Caco-2 (cell line): ENCODE measurements at regions of chr20 and their contacts with region 1.

Region 1: DNA sequence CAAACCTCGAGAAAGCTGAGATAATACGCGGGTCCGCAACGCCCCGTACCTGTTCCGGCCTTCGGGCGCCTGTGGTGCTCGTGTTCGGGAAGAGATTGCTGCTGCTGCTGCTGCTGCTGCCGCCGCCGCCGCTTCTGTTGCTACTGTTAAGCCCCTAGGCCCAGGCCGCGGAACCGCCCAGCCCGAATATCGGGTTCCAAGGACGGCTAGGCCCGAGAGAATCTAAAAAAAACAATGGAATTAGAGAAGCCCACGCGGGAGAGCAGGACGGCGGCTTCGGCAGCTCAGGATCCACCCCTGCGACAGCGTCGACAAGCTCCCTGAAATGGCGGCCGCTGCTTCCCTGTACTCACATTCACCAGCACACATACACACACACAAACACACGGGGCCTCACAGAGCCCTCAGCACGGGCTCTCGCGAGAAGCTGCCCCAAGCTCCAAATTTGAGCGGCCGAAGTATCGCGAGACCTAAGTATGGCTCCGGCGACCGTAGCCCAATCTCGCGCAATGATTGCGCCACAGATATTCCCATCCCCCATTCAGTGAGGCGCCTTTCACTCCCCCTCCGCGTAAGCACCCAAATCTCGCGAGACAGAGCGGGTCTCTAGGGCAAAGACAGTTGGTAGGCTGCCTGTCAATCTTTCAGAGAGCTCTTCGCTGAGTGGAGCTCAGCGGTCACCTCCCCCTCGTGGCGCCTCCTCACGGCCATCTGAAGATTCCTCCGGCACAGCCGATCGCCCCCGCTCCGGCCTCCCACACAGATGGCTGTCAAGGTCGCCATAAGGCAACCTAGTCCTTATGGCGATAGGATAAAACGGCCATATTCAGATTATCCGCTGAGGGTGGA is at the start of gene RBM39:
- DNase-seq: peak; percentile 100
- H3K4me3 ChIP-seq: peak within 1 kb of the TSS; percentile 77
- H3K4me3 Mint-ChIP-seq: peak within 1 kb of the TSS; percentile 80
- H3K27ac Mint-ChIP-seq: peak within 1 kb of the TSS; percentile 96
- H3K4me1 ChIP-seq: peaks cover 31% of the 10 kb centered on the region
- H3K4me1 Mint-ChIP-seq: peaks cover 34% of the 10 kb centered on the region
- H3K27me3 ChIP-seq: no peaks in the 10 kb centered on the region
- H3K27me3 Mint-ChIP-seq: no peaks in the 10 kb centered on the region
- CTCF ChIP-seq: peak; percentile 52 to 65
- total RNA-seq, gene RBM39: 750 and 777 TPM in 2 replicates

Region 2: GRCh38 chr20:35517125-35517524 is 225.0 kb before region 1 on chr20:
- CTCF ChIA-PET with region 1: no interaction called
- POLR2A ChIA-PET with region 1: no interaction called
- intact Hi-C with region 1: no loop called
- DNase-seq: no peak
- H3K4me3 ChIP-seq: no peak overlapping the region
- H3K4me3 Mint-ChIP-seq: no peak overlapping the region
- H3K27ac Mint-ChIP-seq: no peak overlapping the region
- H3K4me1 ChIP-seq: no peaks in the 10 kb centered on the region
- H3K4me1 Mint-ChIP-seq: no peaks in the 10 kb centered on the region
- H3K27me3 ChIP-seq: no peaks in the 10 kb centered on the region
- H3K27me3 Mint-ChIP-seq: no peaks in the 10 kb centered on the region
- CTCF ChIP-seq: no peak

Region 3: GRCh38 chr20:35629427-35630145 is 112.5 kb before region 1 on chr20:
- CTCF ChIA-PET with region 1: no interaction called
- POLR2A ChIA-PET with region 1: interaction called, 16 read pairs
- intact Hi-C with region 1: no loop called
- DNase-seq: no peak
- H3K4me3 ChIP-seq: no peak overlapping the region
- H3K4me3 Mint-ChIP-seq: no peak overlapping the region
- H3K27ac Mint-ChIP-seq: no peak overlapping the region
- H3K4me1 ChIP-seq: no peaks in the 10 kb centered on the region
- H3K4me1 Mint-ChIP-seq: peaks cover 6% of the 10 kb centered on the region
- H3K27me3 ChIP-seq: no peaks in the 10 kb centered on the region
- H3K27me3 Mint-ChIP-seq: no peaks in the 10 kb centered on the region
- CTCF ChIP-seq: no peak

Region 4: DNA sequence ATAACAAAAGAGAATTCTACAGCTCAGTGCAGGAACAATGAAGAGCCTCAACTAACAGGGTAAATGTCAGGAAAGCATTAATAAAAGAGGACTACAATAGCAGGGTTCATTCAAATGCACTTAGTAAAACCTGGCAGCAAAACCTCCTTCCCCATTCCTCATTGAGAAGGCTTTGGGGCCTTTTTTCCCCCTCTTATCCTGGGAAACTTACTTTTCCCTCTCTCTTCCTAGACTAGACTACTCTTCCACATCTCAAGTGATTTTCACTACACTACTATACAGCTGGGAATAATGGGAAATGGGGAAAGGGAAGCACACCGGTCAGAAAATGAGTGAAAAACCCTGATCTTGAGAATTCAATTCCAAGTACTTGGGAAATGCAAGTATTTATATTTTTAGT is 32.9 kb before region 1 on chr20:
- CTCF ChIA-PET with region 1: no interaction called
- POLR2A ChIA-PET with region 1: interaction called, 13 read pairs
- intact Hi-C with region 1: no loop called
- DNase-seq: no peak
- H3K4me3 ChIP-seq: no peak overlapping the region
- H3K4me3 Mint-ChIP-seq: no peak overlapping the region
- H3K27ac Mint-ChIP-seq: peak overlapping the region; percentile 4
- H3K4me1 ChIP-seq: no peaks in the 10 kb centered on the region
- H3K4me1 Mint-ChIP-seq: peaks cover 10% of the 10 kb centered on the region
- H3K27me3 ChIP-seq: no peaks in the 10 kb centered on the region
- H3K27me3 Mint-ChIP-seq: no peaks in the 10 kb centered on the region
- CTCF ChIP-seq: no peak

Region 5: DNA sequence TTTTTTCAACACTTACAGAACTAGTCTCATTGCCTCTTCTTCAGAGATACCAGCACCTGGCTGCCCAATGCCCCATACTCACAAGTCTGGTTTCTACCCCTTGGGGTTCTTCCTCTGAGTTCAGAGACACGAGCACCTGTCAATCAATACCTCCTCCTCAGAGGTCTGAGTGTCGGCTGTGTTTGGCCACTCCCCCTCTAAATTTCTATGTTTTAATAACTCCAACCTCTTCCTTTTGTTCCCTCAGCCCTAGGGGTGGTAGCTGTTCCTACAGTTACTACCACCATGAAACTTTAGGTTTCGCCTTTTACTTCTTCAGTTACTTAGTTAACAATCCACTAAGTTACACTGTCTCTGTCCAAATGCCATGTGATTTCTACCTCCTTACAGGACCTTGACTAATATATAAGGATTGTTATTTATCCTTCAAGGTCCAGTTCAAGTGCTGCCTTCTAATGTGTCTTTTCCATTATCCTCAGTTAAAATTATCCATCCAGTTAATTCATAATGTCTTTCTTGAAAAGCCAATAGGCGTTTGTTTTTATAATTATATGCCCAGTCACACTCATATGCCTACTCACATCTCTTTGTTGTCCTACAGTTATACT is 15.1 kb after region 1 on chr20:
- CTCF ChIA-PET with region 1: interaction called, 3 read pairs
- POLR2A ChIA-PET with region 1: interaction called, 19 read pairs
- intact Hi-C with region 1: no loop called
- DNase-seq: no peak
- H3K4me3 ChIP-seq: no peak overlapping the region
- H3K4me3 Mint-ChIP-seq: no peak overlapping the region
- H3K27ac Mint-ChIP-seq: no peak overlapping the region
- H3K4me1 ChIP-seq: no peaks in the 10 kb centered on the region
- H3K4me1 Mint-ChIP-seq: peaks cover 6% of the 10 kb centered on the region
- H3K27me3 ChIP-seq: no peaks in the 10 kb centered on the region
- H3K27me3 Mint-ChIP-seq: no peaks in the 10 kb centered on the region
- CTCF ChIP-seq: no peak

Region 6: DNA sequence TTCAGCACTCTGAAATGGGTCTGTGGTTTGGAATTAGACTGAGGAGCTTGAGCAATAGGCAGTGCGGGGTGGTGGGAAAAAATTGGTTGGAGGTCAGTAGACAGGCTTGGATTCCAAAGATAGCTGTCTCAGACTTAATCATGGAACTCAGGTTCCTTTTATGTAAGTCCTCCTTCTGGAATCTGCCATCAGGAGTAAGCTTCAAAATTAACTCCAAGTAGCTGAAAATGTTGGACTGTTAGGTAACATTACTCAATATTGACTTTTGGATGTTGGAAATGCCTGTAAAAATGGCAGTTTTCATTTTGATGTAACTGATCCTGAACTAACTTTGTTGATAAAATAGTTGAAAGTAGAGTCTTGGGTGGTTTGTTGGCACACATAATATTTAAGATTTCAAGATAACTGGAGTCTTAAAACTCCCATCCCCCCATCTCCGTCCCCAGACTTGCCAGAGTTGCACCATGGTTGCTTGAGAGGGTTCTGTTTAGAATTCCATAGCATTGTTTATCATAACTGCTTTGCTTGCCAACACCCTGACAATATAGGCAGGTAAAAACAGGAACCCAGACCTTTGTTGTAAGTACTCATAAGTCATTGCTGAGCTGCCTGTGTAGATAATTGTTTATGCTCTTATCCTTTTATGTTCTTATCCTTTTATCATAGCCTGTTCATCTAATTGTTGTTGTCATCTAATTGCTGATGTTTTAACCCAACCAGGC is 112.8 kb after region 1 on chr20:
- CTCF ChIA-PET with region 1: interaction called, 3 read pairs
- POLR2A ChIA-PET with region 1: interaction called, 27 read pairs
- intact Hi-C with region 1: no loop called
- DNase-seq: peak in 1 of 2 experiments; percentile 73
- H3K4me3 ChIP-seq: no peak overlapping the region
- H3K4me3 Mint-ChIP-seq: no peak overlapping the region
- H3K27ac Mint-ChIP-seq: peak overlapping the region; percentile 40
- H3K4me1 ChIP-seq: peaks cover 25% of the 10 kb centered on the region
- H3K4me1 Mint-ChIP-seq: peaks cover 35% of the 10 kb centered on the region
- H3K27me3 ChIP-seq: no peaks in the 10 kb centered on the region
- H3K27me3 Mint-ChIP-seq: no peaks in the 10 kb centered on the region
- CTCF ChIP-seq: no peak

Region 7: DNA sequence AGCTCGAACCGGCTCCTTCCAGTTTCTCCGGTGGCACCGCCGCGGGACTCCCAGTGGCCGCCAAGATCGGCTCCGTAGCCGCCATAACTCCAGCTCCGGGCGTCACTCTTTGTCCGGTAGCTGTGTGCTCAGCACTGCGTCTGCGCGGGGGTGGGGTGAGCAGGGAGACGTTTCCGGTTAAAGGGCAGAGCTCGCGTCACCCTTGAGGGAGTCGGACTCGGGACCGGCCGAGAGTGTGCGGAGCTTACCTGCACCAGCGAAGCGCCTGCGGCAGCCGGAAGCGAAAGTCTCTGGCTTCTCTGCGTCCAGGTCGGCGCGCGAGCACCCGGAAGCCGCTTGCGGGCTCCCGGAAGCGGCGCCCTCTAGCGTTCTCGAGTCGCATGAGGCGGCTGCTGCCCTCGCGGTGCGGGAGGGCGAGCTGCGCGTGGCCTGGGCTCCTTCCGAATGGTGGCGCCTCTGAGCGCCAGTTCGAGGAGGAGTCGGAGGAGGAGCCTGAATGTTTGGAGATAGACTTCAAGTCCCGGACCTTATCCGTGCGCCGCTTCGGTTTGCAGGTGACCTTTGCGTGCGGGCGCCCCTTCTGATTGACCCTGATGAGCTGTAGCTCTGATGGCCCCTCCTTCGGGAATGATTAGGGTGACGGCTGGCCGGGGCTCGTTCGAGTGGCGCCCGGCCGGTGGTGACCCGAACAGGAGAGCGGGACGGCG is 212.2 kb after region 1 on chr20 and contains the start of gene SCAND1:
- CTCF ChIA-PET with region 1: interaction called, 33 read pairs
- POLR2A ChIA-PET with region 1: interaction called, 87 read pairs
- intact Hi-C with region 1: loop called (anchors 5 kb)
- DNase-seq: peak; percentile 100
- H3K4me3 ChIP-seq: peak within 1 kb of the TSS; percentile 86
- H3K4me3 Mint-ChIP-seq: peak within 1 kb of the TSS; percentile 88
- H3K27ac Mint-ChIP-seq: peak within 1 kb of the TSS; percentile 96
- H3K4me1 ChIP-seq: peaks cover 22% of the 10 kb centered on the region
- H3K4me1 Mint-ChIP-seq: peaks cover 9% of the 10 kb centered on the region
- H3K27me3 ChIP-seq: no peaks in the 10 kb centered on the region
- H3K27me3 Mint-ChIP-seq: no peaks in the 10 kb centered on the region
- CTCF ChIP-seq: peak; percentile 99 to 100
- total RNA-seq, gene SCAND1: 125 and 129 TPM in 2 replicates